ENCODE measurements at regions of chr6 and their contacts with region 1.

Region 1: GRCh38 chr6:44151348-44152108 is 7.1 kb upstream of the CAPN11 start:
- DNase-seq: peak; percentile 79
- H3K4me3 ChIP-seq: no peak overlapping the region
- H3K27ac ChIP-seq: no peak overlapping the region
- H3K4me1 ChIP-seq: peaks cover 1 to 6% (median 4%) of the 10 kb centered on the region in 4 donors
- H3K27me3 ChIP-seq: no peaks in the 10 kb centered on the region
- CTCF ChIP-seq: peak; percentile 98 to 100 (median 99)
- EP300 ChIP-seq: no peak
- POLR2A ChIP-seq: no peak

Region 2: DNA sequence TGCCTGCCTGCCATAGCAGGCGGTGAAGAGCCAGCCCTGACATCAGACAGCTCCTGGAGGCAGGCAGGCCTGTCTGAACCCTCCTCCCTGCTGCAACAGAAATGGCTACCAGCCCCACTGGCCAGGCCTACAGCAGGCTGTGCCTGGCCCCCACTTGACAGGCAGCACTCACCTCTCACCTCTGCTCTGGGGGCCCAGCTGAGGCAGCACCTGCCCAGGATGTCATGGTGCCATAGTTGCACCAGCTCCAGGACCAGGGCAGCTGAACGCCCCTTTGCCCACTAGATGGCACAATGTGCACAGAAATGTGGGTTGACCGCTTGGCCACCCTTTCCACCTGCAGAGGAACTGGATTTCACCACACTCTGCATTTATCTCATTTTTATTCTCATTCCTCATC is 54.9 kb before region 1 on chr6:
- in situ Hi-C with region 1: loop called in 2 of 4 experiments (anchors 5 kb)
- intact Hi-C with region 1: loop called (anchors 1 kb)
- DNase-seq: peak; percentile 81
- H3K4me3 ChIP-seq: no peak overlapping the region
- H3K27ac ChIP-seq: no peak overlapping the region
- H3K4me1 ChIP-seq: peaks cover 0 to 16% (median 10%) of the 10 kb centered on the region in 4 donors
- H3K27me3 ChIP-seq: no peaks in the 10 kb centered on the region
- CTCF ChIP-seq: peak; percentile 75 to 87 (median 84)
- EP300 ChIP-seq: no peak
- POLR2A ChIP-seq: no peak

Region 3: GRCh38 chr6:44116641-44117382 is 34.7 kb before region 1 on chr6:
- in situ Hi-C with region 1: no loop called
- intact Hi-C with region 1: loop called (anchors 1 kb)
- DNase-seq: no peak
- H3K4me3 ChIP-seq: no peak overlapping the region
- H3K27ac ChIP-seq: peak overlapping the region; percentile 68 to 79 (median 75)
- H3K4me1 ChIP-seq: peaks cover 21 to 54% (median 41%) of the 10 kb centered on the region in 4 donors
- H3K27me3 ChIP-seq: no peaks in the 10 kb centered on the region
- CTCF ChIP-seq: no peak
- EP300 ChIP-seq: no peak
- POLR2A ChIP-seq: no peak

Region 4: GRCh38 chr6:44221291-44221960 is 69.9 kb after region 1 on chr6:
- in situ Hi-C with region 1: no loop called
- intact Hi-C with region 1: no loop called
- DNase-seq: peak; percentile 96
- H3K4me3 ChIP-seq: peak overlapping the region in 1 of 4 donors; percentile 79
- H3K27ac ChIP-seq: peak overlapping the region; percentile 85 to 94 (median 86)
- H3K4me1 ChIP-seq: peaks cover 43 to 92% (median 74%) of the 10 kb centered on the region in 4 donors
- H3K27me3 ChIP-seq: peaks cover 4% of the 10 kb centered on the region
- CTCF ChIP-seq: peak; percentile 76 to 92 (median 84)
- EP300 ChIP-seq: no peak
- POLR2A ChIP-seq: no peak